ENCODE measurements at regions of chr19 and their contacts with region 1.

Region 1: GRCh38 chr19:13978347-13978733 is 26.0 kb downstream of the DCAF15 start:
- DNase-seq: no peak
- H3K4me3 Mint-ChIP-seq: no peak overlapping the region
- H3K27ac Mint-ChIP-seq: no peak overlapping the region
- H3K4me1 Mint-ChIP-seq: no peaks in the 10 kb centered on the region
- H3K27me3 Mint-ChIP-seq: no peaks in the 10 kb centered on the region
- CTCF ChIP-seq: no peak

Region 2: GRCh38 chr19:14031719-14032480 is 53.6 kb after region 1 on chr19 and contains the start of gene IL27RA:
- CTCF ChIA-PET with region 1: no interaction called
- intact Hi-C with region 1: loop called (anchors 5 kb)
- DNase-seq: peak; percentile 59
- H3K4me3 Mint-ChIP-seq: peak within 1 kb of the TSS; percentile 91
- H3K27ac Mint-ChIP-seq: peak within 1 kb of the TSS; percentile 39
- H3K4me1 Mint-ChIP-seq: no peaks in the 10 kb centered on the region
- H3K27me3 Mint-ChIP-seq: peaks cover 15% of the 10 kb centered on the region
- CTCF ChIP-seq: peak; percentile 45
- total RNA-seq, gene IL27RA: 7.0 and 7.4 TPM in 2 replicates

Measured in Calu3 (cell line).